Right lobe of liver (tissue), 6 donors: ENCODE measurements at regions of chr10 and their contacts with region 1.

Region 1: GRCh38 chr10:14200698-14201544 is 129.8 kb downstream of the FRMD4A start:
- DNase-seq: no peak
- ATAC-seq: no peak
- H3K4me3 ChIP-seq: no peak overlapping the region
- H3K27ac ChIP-seq: no peak overlapping the region
- H3K4me1 ChIP-seq: no peaks in the 10 kb centered on the region
- H3K27me3 ChIP-seq: no peaks in the 10 kb centered on the region
- CTCF ChIP-seq: peak in 3 of 4 donors; percentile 10 to 22 (median 10)
- POLR2A ChIP-seq: no peak

Region 2: GRCh38 chr10:14032395-14032998 is 168.4 kb before region 1 on chr10:
- intact Hi-C with region 1: no loop called
- DNase-seq: no peak
- ATAC-seq: peak in 3 of 4 donors; percentile 28 to 55 (median 41)
- H3K4me3 ChIP-seq: no peak overlapping the region
- H3K27ac ChIP-seq: no peak overlapping the region
- H3K4me1 ChIP-seq: no peaks in the 10 kb centered on the region
- H3K27me3 ChIP-seq: no peaks in the 10 kb centered on the region
- CTCF ChIP-seq: peak; percentile 52 to 60 (median 56)
- POLR2A ChIP-seq: no peak

Region 3: DNA sequence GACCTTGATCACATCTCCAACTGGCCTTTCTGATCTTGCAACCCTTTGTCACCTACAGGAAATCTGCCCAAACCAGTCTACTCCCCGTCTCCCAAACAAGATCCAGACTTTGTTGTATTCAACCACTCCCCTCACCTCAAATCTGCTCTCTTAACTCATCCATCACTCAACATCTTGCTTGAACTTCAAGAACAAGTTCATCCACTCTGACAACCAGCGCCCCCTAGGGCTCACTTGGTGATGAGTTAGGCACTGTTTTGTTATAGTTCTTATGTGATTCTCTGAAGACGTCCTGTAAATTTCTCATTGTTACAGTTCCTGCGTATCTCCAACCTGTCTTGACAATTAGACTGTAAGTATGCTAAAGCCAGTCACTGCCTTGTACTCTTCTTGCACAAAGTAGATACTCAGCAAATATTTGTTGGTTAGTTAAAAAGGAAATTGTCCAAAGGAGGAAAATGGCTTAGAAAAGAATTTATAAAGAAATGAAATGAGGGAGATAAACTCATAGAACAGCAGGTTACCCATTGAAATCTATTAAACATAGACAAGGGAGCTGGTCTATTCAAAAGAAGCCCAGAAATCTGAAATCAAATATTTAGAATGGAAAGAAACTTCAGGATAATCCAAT is 124.5 kb after region 1 on chr10:
- intact Hi-C with region 1: loop called in 1 of 2 experiments (anchors 10 kb)
- DNase-seq: peak; percentile 64 to 66 (median 66)
- ATAC-seq: peak; percentile 43 to 64 (median 61)
- H3K4me3 ChIP-seq: no peak overlapping the region
- H3K27ac ChIP-seq: no peak overlapping the region
- H3K4me1 ChIP-seq: no peaks in the 10 kb centered on the region
- H3K27me3 ChIP-seq: no peaks in the 10 kb centered on the region
- CTCF ChIP-seq: peak; percentile 52 to 74 (median 61)
- POLR2A ChIP-seq: no peak

Region 4: DNA sequence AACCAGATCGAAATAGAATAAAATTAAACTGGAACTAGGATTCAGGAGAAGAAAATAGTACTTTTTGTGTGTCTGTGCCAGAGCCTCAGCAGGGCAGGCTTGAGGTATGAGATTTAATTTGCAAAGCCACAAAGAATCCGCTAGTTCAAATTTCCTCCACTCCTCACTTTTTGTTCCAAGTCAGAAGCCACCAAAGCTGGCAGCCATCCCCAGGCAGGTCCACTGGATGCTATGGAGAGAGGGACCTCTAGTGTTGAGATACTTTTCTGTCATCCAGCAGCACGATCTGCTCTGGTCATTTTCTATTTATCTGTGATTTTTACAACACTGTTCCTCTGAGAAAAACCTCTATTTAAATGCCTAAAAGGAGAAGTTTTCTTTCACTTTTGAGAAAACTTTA is 277.7 kb after region 1 on chr10:
- intact Hi-C with region 1: loop called (anchors 10 kb)
- DNase-seq: peak; percentile 38 to 57 (median 53)
- ATAC-seq: peak; percentile 58 to 80 (median 73)
- H3K4me3 ChIP-seq: no peak overlapping the region
- H3K27ac ChIP-seq: no peak overlapping the region
- H3K4me1 ChIP-seq: no peaks in the 10 kb centered on the region
- H3K27me3 ChIP-seq: no peaks in the 10 kb centered on the region
- CTCF ChIP-seq: peak; percentile 33 to 53 (median 48)
- POLR2A ChIP-seq: no peak